ENCODE measurements at regions of chr11 and their contacts with region 1.

Region 1: GRCh38 chr11:63738720-63739360 is 29.7 kb downstream of the ZFTA start:
- DNase-seq: peak; percentile 56 to 76 (median 70)
- H3K4me3 ChIP-seq: no peak overlapping the region
- H3K4me3 Mint-ChIP-seq: peak overlapping the region in 1 of 2 donors; percentile 73
- H3K27ac ChIP-seq: no peak overlapping the region
- H3K27ac Mint-ChIP-seq: peak overlapping the region in 2 of 7 donors; percentile 53 to 68
- H3K4me1 ChIP-seq: peaks cover 3 to 7% of the 10 kb centered on the region in 2 donors
- H3K4me1 Mint-ChIP-seq: peaks cover 17% of the 10 kb centered on the region
- H3K27me3 ChIP-seq: no peaks in the 10 kb centered on the region
- H3K27me3 Mint-ChIP-seq: peaks cover 0 to 1% (median 0%) of the 10 kb centered on the region in 3 donors
- CTCF ChIP-seq: peak; percentile 98

Region 2: GRCh38 chr11:63478896-63479295 is 259.9 kb before region 1 on chr11:
- intact Hi-C with region 1: loop called in 1 of 2 experiments (anchors 10 kb)
- DNase-seq: peak; percentile 55 to 75 (median 69)
- H3K4me3 ChIP-seq: no peak overlapping the region
- H3K4me3 Mint-ChIP-seq: no peak overlapping the region
- H3K27ac ChIP-seq: no peak overlapping the region
- H3K27ac Mint-ChIP-seq: no peak overlapping the region
- H3K4me1 ChIP-seq: peaks cover 0 to 3% of the 10 kb centered on the region in 2 donors
- H3K4me1 Mint-ChIP-seq: no peaks in the 10 kb centered on the region
- H3K27me3 ChIP-seq: no peaks in the 10 kb centered on the region
- H3K27me3 Mint-ChIP-seq: peaks cover 2 to 9% (median 5%) of the 10 kb centered on the region in 3 donors
- CTCF ChIP-seq: peak; percentile 92

Region 3: GRCh38 chr11:63671322-63672155 is 67.3 kb before region 1 on chr11 and contains the start of gene ATL3:
- intact Hi-C with region 1: loop called (anchors 2 to 10 kb)
- DNase-seq: peak; percentile 86 to 91 (median 88)
- H3K4me3 ChIP-seq: peak within 1 kb of the TSS; percentile 64 to 90 (median 87)
- H3K4me3 Mint-ChIP-seq: peak within 1 kb of the TSS; percentile 83 to 91
- H3K27ac ChIP-seq: peak within 1 kb of the TSS; percentile 74 to 83
- H3K27ac Mint-ChIP-seq: peak within 1 kb of the TSS; percentile 80 to 93 (median 90)
- H3K4me1 ChIP-seq: peaks cover 38% of the 10 kb centered on the region in 2 donors
- H3K4me1 Mint-ChIP-seq: peaks cover 40% of the 10 kb centered on the region
- H3K27me3 ChIP-seq: no peaks in the 10 kb centered on the region
- H3K27me3 Mint-ChIP-seq: no peaks in the 10 kb centered on the region
- CTCF ChIP-seq: no peak
- polyA plus RNA-seq, gene ATL3: 10.6 to 25.5 (median 22.7) TPM

Region 4: GRCh38 chr11:63855975-63856749 is 117.3 kb after region 1 on chr11:
- intact Hi-C with region 1: no loop called
- DNase-seq: no peak
- H3K4me3 ChIP-seq: no peak overlapping the region
- H3K4me3 Mint-ChIP-seq: no peak overlapping the region
- H3K27ac ChIP-seq: peak overlapping the region in 1 of 2 donors; percentile 72
- H3K27ac Mint-ChIP-seq: peak overlapping the region in 5 of 7 donors; percentile 18 to 81 (median 25)
- H3K4me1 ChIP-seq: peaks cover 47 to 71% of the 10 kb centered on the region in 2 donors
- H3K4me1 Mint-ChIP-seq: peaks cover 64% of the 10 kb centered on the region
- H3K27me3 ChIP-seq: no peaks in the 10 kb centered on the region
- H3K27me3 Mint-ChIP-seq: no peaks in the 10 kb centered on the region
- CTCF ChIP-seq: no peak

Measured in CD14-positive monocyte (primary cell).